A673 (cell line): ENCODE measurements at regions of chr3 and their contacts with region 1.

Region 1: DNA sequence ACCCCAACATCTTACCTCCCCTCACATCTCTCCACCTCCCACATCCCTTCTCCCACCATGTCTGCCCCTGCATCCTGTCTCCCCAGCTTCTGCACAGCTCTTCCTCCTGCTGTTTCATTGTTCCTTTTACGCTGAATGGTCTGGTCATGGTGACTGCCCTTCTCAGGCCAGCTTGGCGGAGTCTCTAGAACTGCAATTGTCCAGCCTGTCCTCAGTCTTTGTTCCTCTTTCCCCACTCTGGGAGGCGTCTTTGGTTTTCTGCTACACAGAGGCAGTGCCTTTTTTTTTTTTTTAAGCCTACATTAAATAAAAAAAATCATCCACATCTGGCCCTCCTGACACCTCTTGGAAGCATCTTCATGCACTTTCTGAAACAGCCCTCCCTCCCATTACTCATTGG is 49.1 kb upstream of the SEC22A start:
- DNase-seq: peak; percentile 20
- H3K4me3 ChIP-seq: no peak overlapping the region
- H3K27ac ChIP-seq: peak overlapping the region; percentile 73
- H3K4me1 ChIP-seq: peaks cover 23% of the 10 kb centered on the region
- H3K27me3 ChIP-seq: no peaks in the 10 kb centered on the region
- CTCF ChIP-seq: no peak

Region 2: GRCh38 chr3:123096731-123097130 is 56.0 kb before region 1 on chr3:
- CTCF ChIA-PET with region 1: no interaction called
- POLR2A ChIA-PET with region 1: no interaction called
- intact Hi-C with region 1: no loop called
- DNase-seq: no peak
- H3K4me3 ChIP-seq: no peak overlapping the region
- H3K27ac ChIP-seq: no peak overlapping the region
- H3K4me1 ChIP-seq: no peaks in the 10 kb centered on the region
- H3K27me3 ChIP-seq: no peaks in the 10 kb centered on the region
- CTCF ChIP-seq: no peak

Region 3: GRCh38 chr3:123258811-123259420 is 106.2 kb after region 1 on chr3:
- CTCF ChIA-PET with region 1: interaction called, 3 read pairs
- POLR2A ChIA-PET with region 1: no interaction called
- intact Hi-C with region 1: loop called (anchors 5 kb)
- DNase-seq: peak; percentile 80
- H3K4me3 ChIP-seq: no peak overlapping the region
- H3K27ac ChIP-seq: no peak overlapping the region
- H3K4me1 ChIP-seq: peaks cover 21% of the 10 kb centered on the region
- H3K27me3 ChIP-seq: no peaks in the 10 kb centered on the region
- CTCF ChIP-seq: peak; percentile 79

Region 4: GRCh38 chr3:123582315-123582714 is 429.6 kb after region 1 on chr3:
- CTCF ChIA-PET with region 1: no interaction called
- POLR2A ChIA-PET with region 1: interaction called, 10 read pairs
- intact Hi-C with region 1: no loop called
- DNase-seq: no peak
- H3K4me3 ChIP-seq: no peak overlapping the region
- H3K27ac ChIP-seq: no peak overlapping the region
- H3K4me1 ChIP-seq: peaks cover 21% of the 10 kb centered on the region
- H3K27me3 ChIP-seq: no peaks in the 10 kb centered on the region
- CTCF ChIP-seq: no peak

Region 5: DNA sequence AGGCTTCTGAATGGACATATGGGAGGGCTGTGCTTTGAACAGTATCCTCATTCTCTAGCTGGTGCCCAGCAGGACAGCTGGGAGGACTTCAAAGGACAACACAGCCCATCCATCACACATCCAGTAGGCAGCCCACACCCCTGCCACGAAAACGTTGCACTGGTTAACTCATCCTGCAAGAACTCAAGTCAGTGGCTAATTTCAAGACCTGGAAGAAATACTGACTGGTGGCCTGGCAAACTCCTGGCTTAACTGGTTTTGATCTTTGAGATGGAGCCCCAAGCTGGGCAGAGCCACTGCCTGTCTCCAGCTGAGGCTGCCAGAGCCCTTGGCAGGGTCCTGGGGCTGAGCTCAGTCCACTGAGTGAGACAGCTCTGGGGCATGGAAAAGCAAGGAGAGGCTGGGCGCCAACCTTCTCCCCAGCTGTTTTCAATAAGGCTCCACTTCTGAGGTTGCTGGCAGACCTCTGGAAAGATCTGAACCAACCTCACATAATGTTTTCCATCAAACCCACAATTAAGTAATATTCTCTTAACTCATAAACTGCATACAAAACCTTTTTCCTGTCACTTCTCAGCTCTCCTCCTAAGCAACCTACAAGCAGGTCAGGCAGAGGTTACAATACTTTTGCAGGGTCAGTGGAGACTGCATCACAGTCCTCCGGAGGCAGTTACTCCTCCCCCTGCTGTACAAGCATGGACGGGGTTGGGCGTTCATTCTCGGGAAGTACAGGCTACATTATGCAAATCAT is 621.2 kb after region 1 on chr3:
- CTCF ChIA-PET with region 1: no interaction called
- POLR2A ChIA-PET with region 1: no interaction called
- intact Hi-C with region 1: no loop called
- DNase-seq: no peak
- H3K4me3 ChIP-seq: no peak overlapping the region
- H3K27ac ChIP-seq: no peak overlapping the region
- H3K4me1 ChIP-seq: no peaks in the 10 kb centered on the region
- H3K27me3 ChIP-seq: no peaks in the 10 kb centered on the region
- CTCF ChIP-seq: no peak